Ascending aorta (tissue), 2 donors: ENCODE measurements at regions of chr13 and their contacts with region 1.

Region 1: GRCh38 chr13:33110713-33111413 is 94.6 kb downstream of the KL start:
- DNase-seq: peak in 1 of 2 donors; percentile 77
- H3K4me3 ChIP-seq: peak overlapping the region in 1 of 2 donors; percentile 29
- H3K27ac ChIP-seq: peak overlapping the region; percentile 64 to 81
- H3K4me1 ChIP-seq: peaks cover 24 to 47% of the 10 kb centered on the region in 2 donors
- H3K27me3 ChIP-seq: no peaks in the 10 kb centered on the region
- CTCF ChIP-seq: no peak

Region 2: GRCh38 chr13:33092073-33092987 is 18.5 kb before region 1 on chr13:
- intact Hi-C with region 1: no loop called
- DNase-seq: no peak
- H3K4me3 ChIP-seq: no peak overlapping the region
- H3K27ac ChIP-seq: no peak overlapping the region
- H3K4me1 ChIP-seq: no peaks in the 10 kb centered on the region
- H3K27me3 ChIP-seq: no peaks in the 10 kb centered on the region
- CTCF ChIP-seq: no peak

Region 3: GRCh38 chr13:33153421-33154404 is 42.9 kb after region 1 on chr13:
- intact Hi-C with region 1: loop called (anchors 2 kb)
- DNase-seq: no peak
- H3K4me3 ChIP-seq: peak overlapping the region in 1 of 2 donors; percentile 19
- H3K27ac ChIP-seq: peak overlapping the region; percentile 75 to 76
- H3K4me1 ChIP-seq: peaks cover 0 to 12% of the 10 kb centered on the region in 2 donors
- H3K27me3 ChIP-seq: no peaks in the 10 kb centered on the region
- CTCF ChIP-seq: peak in 2 of 3 experiments; percentile 13 to 50

Region 4: DNA sequence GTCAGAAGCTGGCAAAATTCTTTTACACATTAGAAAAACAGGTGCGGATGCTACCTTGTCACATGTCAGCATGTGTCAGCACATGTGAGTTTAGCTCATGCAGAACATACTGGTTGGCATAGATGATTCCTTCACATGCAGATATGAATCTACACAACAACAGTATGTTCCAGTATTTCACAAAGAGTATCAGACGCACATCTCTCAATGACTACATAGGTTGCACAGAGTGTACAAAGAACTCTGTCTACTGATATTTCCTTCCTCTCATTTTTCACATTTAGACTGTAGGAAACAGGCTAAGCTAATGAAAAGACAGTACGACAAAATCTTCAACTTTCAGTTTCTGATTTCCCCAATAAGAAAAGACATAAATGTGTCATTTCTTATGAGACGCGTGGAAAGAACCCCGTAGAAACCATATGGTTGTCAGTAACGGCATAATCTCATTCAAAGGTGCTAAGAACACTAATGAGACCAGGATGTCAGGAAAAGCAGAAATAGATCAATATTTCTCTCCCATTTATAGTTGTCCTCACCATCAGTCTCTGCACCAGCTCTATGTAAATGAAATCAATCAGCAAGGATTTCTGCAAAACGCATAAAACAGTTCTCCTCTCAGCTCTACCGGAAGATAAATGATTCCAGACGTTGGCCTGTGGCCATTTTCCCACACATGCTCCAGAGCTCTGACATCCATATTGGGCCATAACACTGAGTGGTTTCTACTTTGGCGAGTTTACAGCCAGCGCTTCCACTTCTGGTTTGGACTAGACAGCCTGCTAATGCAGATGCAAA is 93.5 kb after region 1 on chr13:
- intact Hi-C with region 1: loop called (anchors 5 kb)
- DNase-seq: peak in 1 of 2 donors; percentile 87
- H3K4me3 ChIP-seq: peak overlapping the region; percentile 52 to 67
- H3K27ac ChIP-seq: peak overlapping the region; percentile 63 to 82
- H3K4me1 ChIP-seq: peaks cover 9 to 41% of the 10 kb centered on the region in 2 donors
- H3K27me3 ChIP-seq: no peaks in the 10 kb centered on the region
- CTCF ChIP-seq: no peak

Region 5: DNA sequence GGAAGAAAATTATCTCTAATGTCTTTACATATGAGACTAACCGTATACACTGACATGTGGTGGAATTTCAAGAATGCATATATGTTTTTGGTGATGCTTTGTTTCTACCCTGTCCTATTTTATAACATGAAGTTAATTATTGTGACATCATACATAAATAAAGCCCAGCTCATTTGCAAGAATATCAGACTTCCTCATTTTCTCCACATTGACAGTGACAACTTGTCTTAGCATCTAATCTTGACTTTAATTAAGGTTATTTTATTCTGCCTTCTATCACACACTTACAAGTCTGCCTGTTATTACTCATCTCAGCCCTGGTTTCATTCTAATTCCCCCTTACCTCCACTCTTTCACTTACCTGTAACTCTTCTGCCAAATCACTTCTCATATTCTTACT is 315.3 kb after region 1 on chr13:
- intact Hi-C with region 1: no loop called
- DNase-seq: no peak
- H3K4me3 ChIP-seq: no peak overlapping the region
- H3K27ac ChIP-seq: no peak overlapping the region
- H3K4me1 ChIP-seq: no peaks in the 10 kb centered on the region
- H3K27me3 ChIP-seq: no peaks in the 10 kb centered on the region
- CTCF ChIP-seq: no peak

Region 6: DNA sequence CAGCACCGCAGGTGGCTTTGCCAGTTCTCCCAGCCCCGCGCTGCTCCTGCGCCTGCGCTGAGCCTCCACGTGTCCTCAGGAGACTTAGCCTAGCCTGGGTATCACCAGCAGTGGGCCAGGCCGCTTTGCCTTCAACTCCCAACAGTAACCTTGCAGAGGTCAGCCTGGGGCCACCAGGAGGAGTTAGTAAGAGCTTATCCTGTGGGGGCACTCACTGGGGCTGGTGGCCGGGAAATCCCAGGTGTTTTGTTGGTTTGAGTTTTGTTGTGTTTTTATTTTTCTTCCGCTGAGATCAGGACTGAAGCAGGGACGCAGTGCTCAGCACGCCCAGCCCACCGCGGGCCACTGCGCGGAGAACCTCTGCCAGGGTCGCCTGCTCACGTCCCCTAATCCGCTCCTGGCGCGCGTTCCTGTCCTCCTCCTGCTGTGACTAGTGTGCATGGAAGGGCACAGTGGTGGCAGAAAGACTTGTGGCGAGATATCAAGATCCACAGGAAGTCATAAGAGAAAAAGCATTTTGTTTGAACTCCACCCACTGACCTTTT is 499.7 kb after region 1 on chr13:
- intact Hi-C with region 1: loop called (anchors 10 kb)
- DNase-seq: peak; percentile 14 to 84
- H3K4me3 ChIP-seq: peak overlapping the region; percentile 40 to 64
- H3K27ac ChIP-seq: peak overlapping the region; percentile 89 to 90
- H3K4me1 ChIP-seq: peaks cover 0 to 11% of the 10 kb centered on the region in 2 donors
- H3K27me3 ChIP-seq: no peaks in the 10 kb centered on the region
- CTCF ChIP-seq: no peak